ENCODE measurements at regions of chr12 and their contacts with region 1.

Region 1: DNA sequence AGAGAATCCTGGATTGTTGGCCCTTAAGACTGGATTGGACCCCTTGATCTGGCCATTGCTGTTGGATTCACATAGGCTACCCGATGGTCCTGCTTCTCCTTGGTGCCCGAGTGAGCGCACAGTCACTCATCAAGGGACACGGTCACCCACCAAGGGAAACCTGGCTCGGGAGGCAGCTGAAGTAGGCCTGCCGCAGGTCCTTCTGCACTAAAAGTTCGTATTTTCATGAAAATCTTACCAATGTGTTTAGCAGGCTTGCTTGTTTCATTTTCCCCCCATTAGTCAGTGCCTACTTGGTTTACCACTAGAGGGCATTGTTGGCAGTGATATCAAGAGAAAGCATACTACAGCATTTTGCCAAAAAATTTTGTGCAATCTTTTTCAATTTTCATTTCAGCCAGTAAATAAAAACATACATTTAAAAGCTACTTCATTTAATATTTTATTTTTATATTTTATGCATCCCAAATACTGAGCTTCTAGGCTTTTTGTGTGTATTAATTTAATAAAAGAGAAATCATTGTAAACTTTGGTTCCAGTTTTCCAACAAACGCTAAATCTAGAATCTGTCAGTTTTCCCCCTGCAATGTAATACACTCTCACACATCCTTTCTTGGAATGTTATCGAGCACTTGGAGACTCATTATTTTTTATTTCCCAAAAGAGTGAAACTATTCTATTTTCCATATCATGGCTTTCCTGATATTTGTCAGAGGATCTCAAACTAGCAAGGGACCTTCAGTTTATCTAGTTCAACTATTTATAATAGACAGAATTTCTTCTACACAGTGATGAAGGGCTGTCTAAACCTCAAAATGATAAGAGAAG is 116.7 kb downstream of the LMNTD1 start:
- DNase-seq: peak in 8 of 9 donors; percentile 25 to 70 (median 52)
- ATAC-seq: peak; percentile 79
- H3K4me3 ChIP-seq: no peak overlapping the region
- H3K4me3 Mint-ChIP-seq: peak overlapping the region in 8 of 10 donors; percentile 29 to 71 (median 54)
- H3K27ac ChIP-seq: no peak overlapping the region
- H3K27ac Mint-ChIP-seq: peak overlapping the region in 4 of 9 donors; percentile 22 to 85 (median 54)
- H3K4me1 ChIP-seq: peaks cover 0 to 4% of the 10 kb centered on the region in 2 donors
- H3K4me1 Mint-ChIP-seq: peaks cover 3 to 13% (median 6%) of the 10 kb centered on the region in 7 donors
- H3K27me3 ChIP-seq: no peaks in the 10 kb centered on the region
- H3K27me3 Mint-ChIP-seq: peaks cover 0 to 7% (median 0%) of the 10 kb centered on the region in 5 donors

Region 2: DNA sequence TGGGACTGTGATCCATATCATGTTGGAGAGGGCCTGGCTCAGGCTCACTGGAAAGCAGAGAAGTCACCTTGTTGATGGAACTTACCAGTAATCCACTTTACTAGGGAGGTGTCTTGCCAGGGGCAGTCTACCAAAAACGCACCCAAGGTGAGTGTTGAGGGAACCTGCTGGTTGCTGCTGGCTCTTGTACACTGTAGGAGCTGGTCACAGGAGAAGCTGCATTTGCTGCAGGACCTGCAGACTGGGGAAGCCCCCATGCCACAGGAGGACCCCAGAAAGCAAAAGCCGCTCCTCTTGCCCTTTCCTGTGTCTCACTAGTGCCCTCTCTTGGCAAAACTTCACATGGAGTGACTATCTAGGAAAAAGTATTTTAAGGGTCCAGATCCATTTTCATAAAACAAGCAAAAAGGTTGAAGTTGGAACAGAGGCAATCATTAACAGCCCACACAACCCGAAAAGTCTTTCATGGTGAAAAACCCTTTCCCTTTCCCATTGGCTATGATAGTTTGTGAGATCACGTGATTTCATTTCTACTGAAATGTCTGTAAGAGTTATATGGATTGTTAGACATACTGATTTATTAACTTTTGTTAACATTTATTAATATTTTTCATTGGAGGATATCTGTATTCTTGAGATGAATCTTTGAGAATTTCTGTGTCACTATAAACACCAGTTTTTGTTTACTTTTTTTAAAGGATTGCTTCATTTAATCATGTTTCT is 581.2 kb after region 1 on chr12:
- CTCF ChIA-PET with region 1: interaction called, 4 read pairs
- POLR2A ChIA-PET with region 1: no interaction called
- intact Hi-C with region 1: loop called (anchors 1 kb)
- DNase-seq: peak in 3 of 9 donors; percentile 14 to 21 (median 16)
- ATAC-seq: no peak
- H3K4me3 ChIP-seq: no peak overlapping the region
- H3K4me3 Mint-ChIP-seq: no peak overlapping the region
- H3K27ac ChIP-seq: no peak overlapping the region
- H3K27ac Mint-ChIP-seq: no peak overlapping the region
- H3K4me1 ChIP-seq: no peaks in the 10 kb centered on the region
- H3K4me1 Mint-ChIP-seq: peaks cover 0 to 2% (median 0%) of the 10 kb centered on the region in 7 donors
- H3K27me3 ChIP-seq: no peaks in the 10 kb centered on the region
- H3K27me3 Mint-ChIP-seq: peaks cover 10 to 31% (median 12%) of the 10 kb centered on the region in 5 donors

Measured in naive thymus-derived CD4-positive, alpha-beta T cell (primary cell).